AG04449 (cell line): ENCODE measurements at regions of chr7 and their contacts with region 1.

Region 1: GRCh38 chr7:148856891-148857290 is 27.2 kb downstream of the EZH2 start:
- DNase-seq: no peak
- H3K4me3 ChIP-seq: no peak overlapping the region
- CTCF ChIP-seq: no peak

Region 2: DNA sequence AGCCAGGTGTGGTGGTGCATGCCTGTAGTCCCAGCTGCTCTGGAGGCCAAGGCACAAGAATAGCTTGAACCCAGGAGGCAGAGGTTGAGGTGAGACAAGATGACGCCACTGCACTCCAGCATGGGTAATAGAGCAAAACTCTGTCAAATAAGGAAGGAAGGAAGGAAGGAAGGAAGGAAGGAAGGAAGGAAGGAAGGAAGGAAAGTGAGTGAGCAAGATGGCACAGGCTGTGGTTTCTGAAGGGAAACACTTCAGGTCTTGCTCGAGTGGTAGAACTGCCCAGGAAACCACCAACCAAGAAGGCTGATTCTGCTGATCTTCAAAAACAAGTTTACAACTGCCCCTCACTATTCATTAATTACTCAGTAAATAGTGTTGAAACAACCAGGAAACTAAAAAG is 18.0 kb before region 1 on chr7:
- CTCF ChIA-PET with region 1: interaction called, 21 read pairs
- POLR2A ChIA-PET with region 1: no interaction called
- DNase-seq: no peak
- H3K4me3 ChIP-seq: no peak overlapping the region
- CTCF ChIP-seq: no peak

Region 3: DNA sequence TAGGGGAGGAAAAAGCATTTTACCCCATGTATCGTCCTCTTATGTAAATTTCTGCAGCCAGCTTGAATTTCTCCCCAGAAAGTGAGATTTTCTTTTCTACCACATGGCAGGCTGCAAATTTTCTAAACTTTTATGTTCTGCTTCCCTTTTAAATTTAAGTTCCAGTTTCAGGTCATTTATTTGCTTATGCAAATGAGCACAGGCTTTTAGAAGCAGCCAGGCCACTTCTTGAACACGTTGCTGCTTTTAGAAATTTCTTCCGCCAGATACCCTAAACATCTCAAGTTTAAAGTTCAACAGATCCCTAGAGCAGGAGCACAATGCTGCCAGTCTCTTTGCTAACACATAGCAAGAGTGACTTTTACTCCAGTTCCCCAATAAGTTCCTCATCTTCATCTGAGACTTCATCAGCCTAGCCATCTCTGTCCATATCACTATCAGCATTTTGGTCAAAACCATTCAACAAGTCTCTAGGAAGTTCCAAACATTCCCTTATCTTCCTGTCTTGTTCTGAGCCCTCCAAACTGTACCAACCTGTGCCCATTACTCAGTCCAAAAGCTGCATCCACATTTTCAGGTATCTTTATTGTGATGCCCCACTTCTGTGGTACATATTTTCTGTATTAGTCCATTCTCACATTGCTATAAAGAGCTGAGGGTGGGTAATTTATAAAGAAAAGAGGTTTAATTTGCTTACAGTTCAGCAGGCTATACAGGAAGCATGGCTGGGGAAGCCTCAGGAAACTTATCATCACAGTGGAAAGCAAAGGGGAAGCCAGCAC is 10.9 kb after region 1 on chr7:
- CTCF ChIA-PET with region 1: interaction called, 12 read pairs
- POLR2A ChIA-PET with region 1: no interaction called
- DNase-seq: no peak
- H3K4me3 ChIP-seq: no peak overlapping the region
- CTCF ChIP-seq: no peak

Region 4: DNA sequence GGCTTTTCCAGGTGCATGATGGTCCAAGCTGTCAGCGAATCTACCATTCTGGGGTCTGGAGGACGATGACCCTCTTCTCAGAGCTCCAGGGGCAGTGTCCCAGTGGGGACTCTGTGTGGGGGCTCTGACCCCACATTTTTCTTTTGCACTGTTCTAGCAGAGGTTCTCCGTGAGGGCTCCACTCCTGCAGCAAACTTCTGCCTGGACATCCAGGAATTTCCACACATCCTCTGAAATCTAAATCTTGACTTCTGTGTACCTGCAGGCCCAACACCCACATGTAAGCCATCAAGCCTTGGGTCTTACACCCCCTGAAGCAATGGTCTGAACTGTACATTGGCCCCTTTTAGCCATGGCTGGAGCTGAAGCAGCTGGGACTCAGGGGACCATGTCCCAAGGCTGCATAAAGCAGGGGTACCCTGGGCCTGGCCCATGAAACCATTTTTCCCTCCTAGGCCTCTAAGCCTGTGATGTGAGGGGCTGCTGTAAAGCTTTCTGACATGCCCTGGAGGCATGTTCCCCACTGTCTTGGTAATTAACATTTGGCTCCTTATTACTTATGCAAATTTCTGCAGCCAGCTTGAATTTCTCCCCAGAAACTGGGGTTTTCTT is 492.0 kb after region 1 on chr7:
- CTCF ChIA-PET with region 1: no interaction called
- POLR2A ChIA-PET with region 1: no interaction called
- DNase-seq: no peak
- H3K4me3 ChIP-seq: no peak overlapping the region
- CTCF ChIP-seq: no peak

Region 5: DNA sequence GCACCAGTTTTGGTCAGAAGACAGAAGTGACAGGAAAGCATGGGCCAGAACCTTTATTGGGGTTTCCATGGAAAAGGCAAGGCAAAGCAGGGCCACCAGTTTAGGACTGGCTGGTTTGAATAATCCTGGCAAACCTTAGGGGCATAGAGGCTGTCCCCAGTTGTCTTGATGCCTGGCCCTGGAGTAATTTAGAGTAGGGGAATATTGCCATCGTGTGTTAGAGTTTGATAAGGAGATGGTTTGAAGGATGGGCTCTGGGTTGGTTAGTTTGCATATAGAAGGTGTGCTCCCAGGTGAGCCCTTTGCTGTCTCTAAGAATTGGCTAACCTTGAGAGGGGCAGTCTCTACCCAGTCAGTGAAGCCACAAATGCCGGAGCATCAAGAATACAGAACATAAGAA is 524.4 kb after region 1 on chr7:
- CTCF ChIA-PET with region 1: no interaction called
- POLR2A ChIA-PET with region 1: no interaction called
- DNase-seq: no peak
- H3K4me3 ChIP-seq: no peak overlapping the region
- CTCF ChIP-seq: no peak